Naive thymus-derived CD4-positive, alpha-beta T cell (primary cell): ENCODE measurements at regions of chr1 and their contacts with region 1.

Region 1: DNA sequence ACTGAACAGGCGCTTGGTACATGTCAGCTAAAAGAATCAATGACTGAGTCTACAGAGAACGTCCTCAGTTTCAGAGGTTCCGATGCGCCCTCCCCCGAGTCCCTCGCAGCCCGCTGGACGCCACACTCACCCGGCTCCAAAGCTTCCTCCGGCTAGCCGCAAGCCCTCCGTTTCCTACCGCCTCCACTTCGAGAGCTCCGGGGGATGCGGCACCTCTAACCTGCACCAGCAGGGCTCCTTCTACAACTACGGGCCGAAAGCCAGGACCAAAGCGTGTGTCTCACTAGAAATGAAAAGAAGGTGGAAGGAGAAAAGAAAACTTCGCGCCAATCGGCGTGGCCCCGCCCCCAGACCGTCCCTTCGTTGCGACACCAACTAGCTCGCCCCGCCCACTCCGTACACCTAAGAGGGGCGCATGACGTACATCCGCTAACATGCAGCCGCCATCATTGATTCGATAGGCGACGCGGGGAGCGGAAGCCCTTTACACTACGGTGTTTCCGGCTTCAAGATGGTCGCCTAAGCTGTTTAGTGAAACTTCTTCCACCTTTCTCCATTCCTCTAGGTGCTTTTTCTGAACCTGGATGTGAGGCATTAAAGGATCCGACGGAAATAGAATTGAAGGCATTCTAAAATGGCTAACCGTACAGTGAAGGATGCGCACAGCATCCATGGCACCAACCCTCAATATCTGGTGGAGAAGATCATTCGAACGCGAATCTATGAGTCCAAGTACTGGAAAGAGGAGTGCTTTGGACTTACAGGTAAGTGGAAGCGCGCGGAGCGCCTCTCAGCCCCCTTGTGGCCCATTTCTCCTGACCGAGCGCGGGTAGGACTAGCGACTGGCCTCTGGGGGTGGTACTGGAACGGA is at the starts of genes ORC1 and PRPF38A:
- DNase-seq: peak; percentile 89 to 97 (median 96)
- ATAC-seq: peak; percentile 99
- H3K4me3 ChIP-seq: peak within 1 kb of the TSS; percentile 83
- H3K4me3 Mint-ChIP-seq: peak within 1 kb of the TSS; percentile 96 to 100 (median 99)
- H3K27ac ChIP-seq: peak within 1 kb of the TSS; percentile 92
- H3K27ac Mint-ChIP-seq: peak within 1 kb of the TSS; percentile 95 to 100 (median 98)
- H3K4me1 ChIP-seq: peaks cover 10 to 16% of the 10 kb centered on the region in 2 donors
- H3K4me1 Mint-ChIP-seq: peaks cover 11 to 66% (median 47%) of the 10 kb centered on the region in 7 donors
- H3K27me3 ChIP-seq: no peaks in the 10 kb centered on the region
- H3K27me3 Mint-ChIP-seq: no peaks in the 10 kb centered on the region
- total RNA-seq, gene ORC1: 0.97 to 25.2 (median 1.3) TPM
- total RNA-seq, gene PRPF38A: 62.1 to 98.7 (median 81.6) TPM

Region 2: DNA sequence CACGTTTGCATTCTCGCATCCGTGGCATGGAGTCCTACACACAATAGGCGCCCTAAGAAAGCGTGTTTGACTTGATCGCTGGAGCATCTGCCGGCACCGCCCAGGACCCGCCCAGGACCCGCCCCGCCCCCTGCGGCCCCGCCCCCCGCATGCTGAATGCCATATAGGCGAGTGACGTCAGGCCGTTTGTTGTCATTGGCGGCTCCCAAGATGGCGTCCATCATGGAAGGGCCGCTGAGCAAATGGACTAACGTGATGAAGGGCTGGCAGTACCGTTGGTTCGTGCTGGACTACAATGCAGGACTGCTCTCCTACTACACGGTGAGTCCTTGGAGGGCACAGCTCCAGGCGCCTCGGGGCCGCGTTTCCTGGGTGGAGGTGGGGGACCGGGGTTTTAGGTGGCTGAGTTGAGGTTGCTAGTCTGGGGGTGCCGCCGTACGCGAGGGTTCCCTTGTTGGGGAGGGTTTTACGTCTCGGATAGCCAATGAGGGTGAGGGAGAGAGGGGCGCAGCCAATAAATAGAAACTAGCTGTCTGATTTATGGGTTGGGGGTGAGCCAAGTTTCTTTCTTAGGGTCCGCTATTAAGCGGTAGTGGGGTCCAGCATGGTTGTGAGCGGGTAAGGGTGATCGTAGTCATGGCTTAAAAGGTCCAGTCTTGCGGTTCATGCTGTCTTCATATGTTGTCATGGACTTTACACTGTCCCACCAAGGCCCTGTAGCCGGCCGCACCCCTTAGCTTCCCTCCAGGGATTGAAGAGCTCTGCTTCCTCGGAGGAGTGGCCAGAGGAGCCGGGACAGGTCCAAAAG is 787.2 kb before region 1 on chr1 and contains the start of gene OSBPL9:
- CTCF ChIA-PET with region 1: no interaction called
- POLR2A ChIA-PET with region 1: no interaction called
- intact Hi-C with region 1: loop called in 1 of 2 experiments (anchors 5 kb)
- DNase-seq: peak; percentile 69 to 89 (median 84)
- ATAC-seq: peak; percentile 98
- H3K4me3 ChIP-seq: peak within 1 kb of the TSS; percentile 95
- H3K4me3 Mint-ChIP-seq: peak within 1 kb of the TSS; percentile 98 to 100 (median 99)
- H3K27ac ChIP-seq: peak within 1 kb of the TSS; percentile 86
- H3K27ac Mint-ChIP-seq: peak within 1 kb of the TSS; percentile 94 to 100 (median 99)
- H3K4me1 ChIP-seq: peaks cover 6 to 15% of the 10 kb centered on the region in 2 donors
- H3K4me1 Mint-ChIP-seq: peaks cover 22 to 60% (median 48%) of the 10 kb centered on the region in 7 donors
- H3K27me3 ChIP-seq: no peaks in the 10 kb centered on the region
- H3K27me3 Mint-ChIP-seq: peaks cover 0 to 6% (median 3%) of the 10 kb centered on the region in 5 donors
- total RNA-seq, gene OSBPL9: 44.5 to 56.9 (median 46.6) TPM

Region 3: GRCh38 chr1:51750218-51750617 is 654.1 kb before region 1 on chr1:
- CTCF ChIA-PET with region 1: no interaction called
- POLR2A ChIA-PET with region 1: no interaction called
- intact Hi-C with region 1: no loop called
- DNase-seq: no peak
- ATAC-seq: no peak
- H3K4me3 ChIP-seq: no peak overlapping the region
- H3K4me3 Mint-ChIP-seq: no peak overlapping the region
- H3K27ac ChIP-seq: no peak overlapping the region
- H3K27ac Mint-ChIP-seq: no peak overlapping the region
- H3K4me1 ChIP-seq: no peaks in the 10 kb centered on the region
- H3K4me1 Mint-ChIP-seq: peaks cover 0 to 9% (median under 1%) of the 10 kb centered on the region in 7 donors
- H3K27me3 ChIP-seq: no peaks in the 10 kb centered on the region
- H3K27me3 Mint-ChIP-seq: no peaks in the 10 kb centered on the region

Region 4: GRCh38 chr1:52141513-52142219 is 262.7 kb before region 1 on chr1 and contains the start of gene ZFYVE9:
- CTCF ChIA-PET with region 1: interaction called, 3 read pairs
- POLR2A ChIA-PET with region 1: no interaction called
- intact Hi-C with region 1: loop called in 1 of 2 experiments (anchors 10 kb)
- DNase-seq: peak; percentile 52 to 80 (median 73)
- ATAC-seq: peak; percentile 93
- H3K4me3 ChIP-seq: peak within 1 kb of the TSS; percentile 65
- H3K4me3 Mint-ChIP-seq: peak within 1 kb of the TSS; percentile 79 to 96 (median 92)
- H3K27ac ChIP-seq: peak within 1 kb of the TSS; percentile 72
- H3K27ac Mint-ChIP-seq: peak within 1 kb of the TSS; percentile 64 to 95 (median 86)
- H3K4me1 ChIP-seq: peaks cover 11 to 24% of the 10 kb centered on the region in 2 donors
- H3K4me1 Mint-ChIP-seq: peaks cover 26 to 48% (median 43%) of the 10 kb centered on the region in 7 donors
- H3K27me3 ChIP-seq: no peaks in the 10 kb centered on the region
- H3K27me3 Mint-ChIP-seq: peaks cover 0 to 44% (median 0%) of the 10 kb centered on the region in 5 donors
- total RNA-seq, gene ZFYVE9: 1.8 to 13.9 (median 7.6) TPM

Region 5: DNA sequence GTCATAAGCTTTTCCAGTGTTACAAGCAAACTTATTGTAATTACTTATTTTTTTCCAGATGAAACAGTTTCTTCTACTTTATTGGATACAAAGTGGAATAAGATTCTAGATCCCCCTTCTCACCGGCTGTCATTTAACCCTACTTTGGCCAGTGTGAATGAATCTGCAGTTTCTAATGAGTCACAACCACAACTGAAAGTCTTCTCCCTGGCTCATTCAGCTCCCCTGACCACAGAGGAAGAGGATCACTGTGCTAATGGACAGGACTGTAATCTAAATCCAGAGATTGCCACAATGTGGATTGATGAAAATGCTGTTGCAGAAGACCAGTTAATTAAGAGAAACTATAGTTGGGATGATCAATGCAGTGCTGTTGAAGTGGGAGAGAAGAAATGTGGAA is 166.9 kb before region 1 on chr1:
- CTCF ChIA-PET with region 1: no interaction called
- POLR2A ChIA-PET with region 1: no interaction called
- intact Hi-C with region 1: no loop called
- DNase-seq: no peak
- ATAC-seq: no peak
- H3K4me3 ChIP-seq: no peak overlapping the region
- H3K4me3 Mint-ChIP-seq: no peak overlapping the region
- H3K27ac ChIP-seq: no peak overlapping the region
- H3K27ac Mint-ChIP-seq: no peak overlapping the region
- H3K4me1 ChIP-seq: no peaks in the 10 kb centered on the region
- H3K4me1 Mint-ChIP-seq: peaks cover 0 to 17% (median 1%) of the 10 kb centered on the region in 7 donors
- H3K27me3 ChIP-seq: no peaks in the 10 kb centered on the region
- H3K27me3 Mint-ChIP-seq: peaks cover 0 to 21% (median 0%) of the 10 kb centered on the region in 5 donors

Region 6: DNA sequence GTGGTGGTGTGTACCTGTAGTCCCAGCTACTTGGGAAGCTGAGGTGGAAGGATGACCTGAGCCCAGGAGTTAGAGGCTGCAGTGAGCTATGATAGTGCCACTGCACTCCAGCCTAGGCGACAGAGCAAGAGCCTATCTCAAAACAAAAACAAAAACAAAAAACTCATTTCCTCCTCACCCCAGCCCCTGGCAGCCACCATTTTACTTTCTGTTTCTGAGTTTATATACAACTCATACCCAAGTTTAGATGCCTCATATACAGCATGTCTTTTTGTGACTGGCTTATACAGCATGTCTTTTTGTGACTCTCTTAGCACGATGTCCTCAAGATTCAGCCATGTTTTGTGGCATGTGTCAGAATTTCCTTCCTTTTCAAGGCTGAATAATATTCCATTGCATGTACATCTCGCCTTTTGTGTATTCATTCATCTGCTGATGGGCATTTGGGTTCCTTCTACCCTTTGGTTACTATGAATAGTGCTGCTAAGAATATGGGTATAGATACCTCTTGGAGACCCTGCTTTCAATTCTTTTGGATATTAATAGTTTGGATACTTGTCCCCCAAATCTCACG is 279.1 kb after region 1 on chr1:
- CTCF ChIA-PET with region 1: interaction called, 6 read pairs
- POLR2A ChIA-PET with region 1: interaction called, 3 read pairs
- intact Hi-C with region 1: loop called (anchors 1 kb)
- DNase-seq: no peak
- ATAC-seq: no peak
- H3K4me3 ChIP-seq: no peak overlapping the region
- H3K4me3 Mint-ChIP-seq: no peak overlapping the region
- H3K27ac ChIP-seq: no peak overlapping the region
- H3K27ac Mint-ChIP-seq: peak overlapping the region in 6 of 9 donors; percentile 8 to 68 (median 26)
- H3K4me1 ChIP-seq: peaks cover 4 to 6% of the 10 kb centered on the region in 2 donors
- H3K4me1 Mint-ChIP-seq: peaks cover 6 to 28% (median 13%) of the 10 kb centered on the region in 7 donors
- H3K27me3 ChIP-seq: no peaks in the 10 kb centered on the region
- H3K27me3 Mint-ChIP-seq: no peaks in the 10 kb centered on the region

Region 7: DNA sequence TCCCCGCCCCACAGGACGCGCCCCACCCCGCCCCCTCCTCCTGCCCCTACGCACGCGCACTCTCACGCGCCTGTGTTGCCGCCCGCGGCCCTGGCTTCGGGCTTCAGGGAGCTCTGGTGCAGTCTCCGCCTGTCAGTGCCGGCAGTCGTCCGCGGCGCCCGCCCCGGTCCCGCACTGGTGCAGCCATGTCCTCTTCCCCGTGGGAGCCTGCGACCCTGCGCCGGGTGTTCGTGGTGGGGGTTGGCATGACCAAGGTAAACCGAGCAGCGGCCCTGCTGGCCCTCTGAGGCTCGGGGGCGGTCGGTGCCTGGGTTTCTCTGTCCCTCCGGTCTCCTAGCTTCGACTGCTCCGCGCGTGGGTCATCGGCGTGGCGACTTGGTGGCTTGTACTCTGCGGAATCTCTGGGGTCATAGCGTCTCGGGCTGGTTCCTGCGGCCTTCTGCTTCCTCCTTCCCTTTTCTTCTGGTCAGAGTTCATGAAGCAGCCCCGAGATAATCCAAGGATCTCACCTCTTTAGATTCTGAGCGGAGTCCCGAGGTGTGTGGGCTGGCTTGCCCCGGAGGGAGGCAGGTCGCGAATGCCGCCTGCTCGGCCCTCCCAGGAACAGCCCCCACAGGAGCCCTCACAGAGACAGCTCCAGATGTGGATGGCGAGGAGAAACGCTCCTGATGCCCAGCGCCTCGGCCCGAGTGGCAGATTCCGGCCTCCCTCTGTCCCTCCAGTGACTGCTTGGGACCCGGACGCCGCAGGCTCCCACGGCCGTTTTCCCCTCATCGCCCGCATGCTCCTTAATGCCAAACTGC is 523.1 kb after region 1 on chr1 and contains the start of gene SCP2:
- CTCF ChIA-PET with region 1: no interaction called
- POLR2A ChIA-PET with region 1: no interaction called
- intact Hi-C with region 1: loop called in 1 of 2 experiments (anchors 10 kb)
- DNase-seq: peak; percentile 64 to 83 (median 75)
- ATAC-seq: peak; percentile 96
- H3K4me3 ChIP-seq: peak within 1 kb of the TSS; percentile 87
- H3K4me3 Mint-ChIP-seq: peak within 1 kb of the TSS; percentile 82 to 96 (median 88)
- H3K27ac ChIP-seq: peak within 1 kb of the TSS; percentile 77
- H3K27ac Mint-ChIP-seq: peak within 1 kb of the TSS; percentile 33 to 93 (median 75)
- H3K4me1 ChIP-seq: peaks cover 4 to 7% of the 10 kb centered on the region in 2 donors
- H3K4me1 Mint-ChIP-seq: peaks cover 16 to 41% (median 27%) of the 10 kb centered on the region in 7 donors
- H3K27me3 ChIP-seq: no peaks in the 10 kb centered on the region
- H3K27me3 Mint-ChIP-seq: peaks cover 0 to 6% (median 0%) of the 10 kb centered on the region in 5 donors
- total RNA-seq, gene SCP2: 39.4 to 88.7 (median 48.3) TPM

Region 8: DNA sequence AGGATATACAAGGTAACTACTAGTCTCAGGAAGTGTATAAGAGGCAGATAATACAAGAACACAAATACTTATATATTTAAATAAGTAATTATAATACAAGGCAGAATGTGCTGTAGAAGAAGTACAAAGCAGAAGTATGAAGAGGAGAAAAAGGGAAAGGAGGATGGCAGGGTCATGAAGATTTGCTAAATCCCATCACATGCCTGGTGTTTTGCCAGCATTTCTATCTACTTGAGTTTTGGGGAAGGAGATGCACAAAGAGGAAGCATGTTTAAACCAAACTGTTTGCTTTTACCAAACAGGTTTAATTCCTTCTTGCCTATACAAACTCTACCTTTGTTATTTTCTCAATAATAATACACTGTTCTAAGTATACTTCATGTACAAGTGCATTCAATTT is 596.8 kb after region 1 on chr1:
- CTCF ChIA-PET with region 1: no interaction called
- POLR2A ChIA-PET with region 1: no interaction called
- intact Hi-C with region 1: no loop called
- DNase-seq: no peak
- ATAC-seq: no peak
- H3K4me3 ChIP-seq: no peak overlapping the region
- H3K4me3 Mint-ChIP-seq: no peak overlapping the region
- H3K27ac ChIP-seq: no peak overlapping the region
- H3K27ac Mint-ChIP-seq: no peak overlapping the region
- H3K4me1 ChIP-seq: no peaks in the 10 kb centered on the region
- H3K4me1 Mint-ChIP-seq: no peaks in the 10 kb centered on the region
- H3K27me3 ChIP-seq: no peaks in the 10 kb centered on the region
- H3K27me3 Mint-ChIP-seq: no peaks in the 10 kb centered on the region